PC-9 (cell line): ENCODE measurements at regions of chr2 and their contacts with region 1.

Region 1: DNA sequence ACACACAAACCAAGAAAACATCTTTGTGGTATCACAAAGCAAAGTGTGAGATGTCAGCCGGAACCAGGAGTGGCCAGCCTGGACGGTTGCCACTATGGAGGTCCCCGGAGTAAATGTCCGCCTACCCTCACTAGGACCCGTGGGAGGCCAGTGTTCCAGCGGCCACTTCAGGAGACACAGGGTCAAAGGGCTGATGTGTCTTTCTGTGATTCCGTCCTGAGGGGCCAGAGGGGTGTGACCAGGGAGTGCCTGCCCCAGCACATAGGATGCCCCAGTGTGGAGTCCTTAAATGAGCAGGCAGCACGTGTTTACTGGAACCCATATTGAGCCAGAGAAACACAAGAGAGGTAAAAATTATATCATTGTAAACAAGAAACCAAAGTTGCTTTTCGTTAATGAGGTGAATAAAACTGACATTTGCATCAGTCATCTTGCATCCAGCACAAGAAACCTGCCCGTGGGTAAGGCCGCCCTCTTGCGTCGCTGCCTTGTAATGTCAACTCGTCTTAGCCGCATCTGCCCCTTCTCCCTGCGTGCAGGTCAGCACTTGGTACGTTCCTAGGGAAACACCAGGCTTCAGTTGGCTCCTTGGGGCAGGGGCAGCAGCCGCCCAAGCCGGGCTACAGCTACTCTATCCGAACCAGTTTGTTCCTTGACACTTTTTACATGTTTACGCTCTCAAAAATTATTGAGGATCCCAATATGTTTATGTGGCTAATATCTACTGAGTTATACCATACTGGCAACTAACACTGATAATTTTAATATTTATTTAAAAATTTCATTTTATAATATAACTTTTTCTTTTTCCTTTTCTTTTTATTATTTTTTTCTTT is 46.7 kb upstream of the LAPTM4A start:
- DNase-seq: peak; percentile 68 to 73
- H3K4me3 ChIP-seq: no peak overlapping the region
- H3K27ac ChIP-seq: peak overlapping the region; percentile 1; the same call in 1 of the 2 replicates
- H3K4me1 ChIP-seq: peaks cover 26% of the 10 kb centered on the region
- H3K27me3 ChIP-seq: no peaks in the 10 kb centered on the region
- CTCF ChIP-seq: peak; percentile 90

Region 2: GRCh38 chr2:18387441-18388206 is 1710.5 kb before region 1 on chr2:
- CTCF ChIA-PET with region 1: no interaction called
- POLR2A ChIA-PET with region 1: no interaction called
- intact Hi-C with region 1: loop called (anchors 2 kb)
- DNase-seq: peak; percentile 55 to 70
- H3K4me3 ChIP-seq: no peak overlapping the region
- H3K27ac ChIP-seq: no peak overlapping the region
- H3K4me1 ChIP-seq: no peaks in the 10 kb centered on the region
- H3K27me3 ChIP-seq: no peaks in the 10 kb centered on the region
- CTCF ChIP-seq: peak; percentile 98

Region 3: DNA sequence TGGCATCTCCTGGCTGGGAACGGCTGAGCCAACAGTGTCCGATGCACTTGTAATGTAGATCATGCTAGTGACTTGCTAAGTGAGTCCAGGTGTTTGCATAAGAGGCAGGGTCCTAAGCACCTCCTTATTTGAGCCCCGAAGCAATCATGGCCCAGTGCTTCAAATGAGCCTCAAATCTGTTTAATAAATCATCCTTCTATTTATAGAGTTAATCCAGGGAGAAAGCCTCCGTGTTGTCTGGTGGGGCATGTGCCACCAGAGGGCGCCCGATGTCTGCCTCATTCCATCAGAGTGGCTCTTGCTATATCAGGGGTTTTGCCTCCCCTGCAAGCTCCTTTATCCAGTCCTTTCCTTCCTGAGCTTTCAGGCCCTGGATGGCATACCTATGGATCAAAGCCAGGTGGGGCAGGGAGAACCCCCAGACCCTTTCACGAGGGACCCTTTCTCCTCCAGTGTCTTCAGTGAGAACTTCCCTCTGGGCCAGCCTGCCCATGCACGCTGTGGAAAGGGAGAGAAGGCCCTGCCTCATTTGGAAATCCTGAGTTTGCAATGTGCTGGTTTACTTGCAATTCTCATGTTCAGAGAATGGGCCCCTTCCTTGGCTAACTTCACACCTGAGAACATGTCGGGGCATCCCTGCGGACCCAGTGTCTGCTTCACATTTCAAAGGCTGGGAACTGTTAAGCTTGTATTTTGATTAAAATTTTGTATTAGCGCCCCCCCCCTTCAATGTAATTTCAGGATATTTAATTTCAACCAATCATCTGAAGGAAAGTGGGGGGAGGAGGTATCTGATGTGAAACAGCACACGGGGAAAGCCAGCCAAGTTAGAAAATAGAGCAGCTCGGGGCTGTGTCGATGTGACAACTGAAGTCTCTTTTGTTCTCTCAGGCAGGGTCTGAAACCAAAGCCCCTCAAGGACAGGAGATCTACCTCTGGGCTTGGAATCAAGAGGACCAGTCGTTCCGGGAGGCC is 1577.4 kb before region 1 on chr2:
- CTCF ChIA-PET with region 1: no interaction called
- POLR2A ChIA-PET with region 1: no interaction called
- intact Hi-C with region 1: loop called (anchors 10 kb)
- DNase-seq: peak; percentile 56 to 73
- H3K4me3 ChIP-seq: no peak overlapping the region
- H3K27ac ChIP-seq: no peak overlapping the region
- H3K4me1 ChIP-seq: 0 out of 2 replicates have a peak, but pooled peaks cover 12% of the 10 kb centered on the region
- H3K27me3 ChIP-seq: no peaks in the 10 kb centered on the region
- CTCF ChIP-seq: peak; percentile 97

Region 4: DNA sequence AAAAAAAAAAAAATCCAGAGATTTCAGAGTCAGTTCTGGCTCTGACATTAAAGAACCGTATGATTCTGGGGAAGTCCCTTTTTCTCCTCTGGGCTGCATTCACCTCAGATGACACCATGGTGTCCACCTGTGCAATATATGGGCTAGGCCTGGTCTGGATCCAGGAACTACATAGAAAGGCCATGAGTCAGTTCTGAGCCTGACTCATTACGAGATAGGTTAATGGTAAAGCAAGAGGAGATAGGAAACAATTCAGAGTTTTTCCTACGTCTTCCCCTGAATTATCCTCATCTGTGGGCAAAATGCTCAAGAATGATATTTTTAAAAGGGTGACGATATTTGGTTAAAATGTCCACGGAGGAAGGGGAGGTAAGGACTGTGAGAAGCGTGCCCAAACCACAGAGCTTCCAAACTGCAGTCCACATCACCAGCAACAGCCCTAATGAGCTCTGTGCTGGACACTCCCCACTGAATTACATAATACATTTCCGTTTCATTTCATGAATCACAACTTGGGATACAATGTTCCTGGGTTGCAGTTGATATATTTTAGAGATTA is 559.6 kb before region 1 on chr2:
- CTCF ChIA-PET with region 1: no interaction called
- POLR2A ChIA-PET with region 1: no interaction called
- intact Hi-C with region 1: no loop called
- DNase-seq: peak; percentile 77 to 98
- H3K4me3 ChIP-seq: peak overlapping the region; percentile 41; the same call in 1 of the 2 replicates
- H3K27ac ChIP-seq: peak overlapping the region; percentile 97
- H3K4me1 ChIP-seq: peaks cover 70% of the 10 kb centered on the region
- H3K27me3 ChIP-seq: no peaks in the 10 kb centered on the region
- CTCF ChIP-seq: no peak

Region 5: DNA sequence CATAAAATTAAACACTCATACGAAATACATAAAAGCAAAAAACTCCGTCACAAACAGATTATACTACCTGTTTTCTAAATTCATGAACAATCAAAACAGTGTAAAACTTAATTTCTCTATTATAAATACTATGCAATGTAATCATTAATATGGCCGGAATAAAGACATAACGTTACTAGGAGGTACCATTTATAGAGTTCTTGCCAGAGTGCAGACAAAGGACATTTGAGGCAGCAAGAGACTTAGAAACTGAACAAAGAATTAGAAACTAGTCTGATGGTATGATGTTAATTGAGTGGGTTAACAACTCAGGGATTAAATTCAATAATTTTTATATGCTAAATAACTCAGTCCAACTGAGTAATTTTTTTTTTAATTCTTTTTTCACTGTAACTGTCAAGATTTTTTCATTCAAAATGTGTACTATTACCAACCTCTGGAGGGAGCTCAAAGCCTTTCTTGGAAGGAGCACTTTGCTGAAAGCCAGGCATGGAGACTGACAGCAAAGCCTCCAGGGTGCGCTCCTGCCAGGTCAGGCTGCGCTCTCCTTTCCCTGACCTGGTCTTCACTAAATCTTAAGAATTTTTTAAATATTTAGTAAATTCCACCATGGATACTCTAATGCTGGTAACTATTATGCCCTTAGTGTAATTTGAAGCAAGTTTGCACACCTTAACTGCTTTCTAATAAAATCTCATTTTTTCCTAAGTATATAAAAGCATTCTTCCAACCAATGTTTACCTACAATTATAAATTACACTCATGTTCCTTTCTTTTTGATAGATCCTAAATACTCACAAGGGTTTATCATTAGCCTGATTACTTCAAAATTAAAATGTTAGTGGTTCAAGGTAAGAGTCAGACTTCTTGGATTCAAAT is 142.3 kb before region 1 on chr2:
- CTCF ChIA-PET with region 1: no interaction called
- POLR2A ChIA-PET with region 1: no interaction called
- intact Hi-C with region 1: loop called (anchors 1 kb)
- DNase-seq: peak; percentile 57 to 69
- H3K4me3 ChIP-seq: no peak overlapping the region
- H3K27ac ChIP-seq: no peak overlapping the region
- H3K4me1 ChIP-seq: no peaks in the 10 kb centered on the region
- H3K27me3 ChIP-seq: no peaks in the 10 kb centered on the region
- CTCF ChIP-seq: peak; percentile 91

Region 6: GRCh38 chr2:20015472-20016083 is 82.5 kb before region 1 on chr2:
- CTCF ChIA-PET with region 1: interaction called, 4 read pairs
- POLR2A ChIA-PET with region 1: interaction called, 3 read pairs
- intact Hi-C with region 1: loop called (anchors 1 kb)
- DNase-seq: peak in 1 of 2 experiments; percentile 53
- H3K4me3 ChIP-seq: no peak overlapping the region
- H3K27ac ChIP-seq: no peak overlapping the region
- H3K4me1 ChIP-seq: peaks cover 5% of the 10 kb centered on the region; the same call in 1 of the 2 replicates
- H3K27me3 ChIP-seq: peaks cover 9% of the 10 kb centered on the region; the same call in 1 of the 2 replicates
- CTCF ChIP-seq: peak; percentile 82

Region 7: DNA sequence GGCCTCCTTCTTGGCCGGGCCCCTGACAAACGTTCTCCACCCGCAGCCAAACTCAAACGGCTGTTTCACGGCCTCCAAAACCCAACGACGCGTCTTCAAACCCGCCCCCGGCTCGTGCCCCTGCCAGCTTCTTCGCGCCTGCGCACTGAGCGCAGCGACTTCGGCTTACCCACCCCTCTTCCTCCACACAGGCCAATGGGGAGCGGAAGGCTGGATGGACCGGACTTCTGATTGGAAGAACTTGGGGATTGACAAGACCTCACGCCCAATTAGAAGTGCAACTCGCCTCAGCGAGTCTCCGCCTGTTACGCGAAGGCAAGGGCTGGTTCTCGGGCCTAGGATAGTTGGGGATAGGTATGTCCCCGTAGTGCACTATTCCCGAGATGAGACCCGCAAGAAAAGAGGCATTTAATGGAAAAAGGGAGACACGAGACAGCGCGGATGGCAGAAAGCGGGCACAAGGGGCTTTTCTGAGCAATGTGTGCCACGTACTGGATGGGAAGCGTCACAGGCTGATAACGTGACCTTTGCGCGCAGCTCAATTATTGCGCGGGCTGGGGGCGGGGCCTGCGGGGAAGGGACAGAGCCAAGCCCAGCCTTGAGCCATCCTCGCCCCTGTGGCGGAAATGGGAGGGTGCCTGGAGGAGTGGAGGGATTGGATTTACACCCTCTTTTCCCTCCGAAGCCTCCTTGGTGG is 46.4 kb before region 1 on chr2 and contains the start of gene LAPTM4A:
- CTCF ChIA-PET with region 1: no interaction called
- POLR2A ChIA-PET with region 1: no interaction called
- intact Hi-C with region 1: loop called (anchors 1 kb)
- DNase-seq: peak; percentile 96 to 100
- H3K4me3 ChIP-seq: peak within 1 kb of the TSS; percentile 85
- H3K27ac ChIP-seq: peak within 1 kb of the TSS; percentile 94
- H3K4me1 ChIP-seq: peaks cover 36% of the 10 kb centered on the region
- H3K27me3 ChIP-seq: no peaks in the 10 kb centered on the region
- CTCF ChIP-seq: no peak
- total RNA-seq, gene LAPTM4A: 96.6 and 125 TPM in 2 replicates

Region 8: DNA sequence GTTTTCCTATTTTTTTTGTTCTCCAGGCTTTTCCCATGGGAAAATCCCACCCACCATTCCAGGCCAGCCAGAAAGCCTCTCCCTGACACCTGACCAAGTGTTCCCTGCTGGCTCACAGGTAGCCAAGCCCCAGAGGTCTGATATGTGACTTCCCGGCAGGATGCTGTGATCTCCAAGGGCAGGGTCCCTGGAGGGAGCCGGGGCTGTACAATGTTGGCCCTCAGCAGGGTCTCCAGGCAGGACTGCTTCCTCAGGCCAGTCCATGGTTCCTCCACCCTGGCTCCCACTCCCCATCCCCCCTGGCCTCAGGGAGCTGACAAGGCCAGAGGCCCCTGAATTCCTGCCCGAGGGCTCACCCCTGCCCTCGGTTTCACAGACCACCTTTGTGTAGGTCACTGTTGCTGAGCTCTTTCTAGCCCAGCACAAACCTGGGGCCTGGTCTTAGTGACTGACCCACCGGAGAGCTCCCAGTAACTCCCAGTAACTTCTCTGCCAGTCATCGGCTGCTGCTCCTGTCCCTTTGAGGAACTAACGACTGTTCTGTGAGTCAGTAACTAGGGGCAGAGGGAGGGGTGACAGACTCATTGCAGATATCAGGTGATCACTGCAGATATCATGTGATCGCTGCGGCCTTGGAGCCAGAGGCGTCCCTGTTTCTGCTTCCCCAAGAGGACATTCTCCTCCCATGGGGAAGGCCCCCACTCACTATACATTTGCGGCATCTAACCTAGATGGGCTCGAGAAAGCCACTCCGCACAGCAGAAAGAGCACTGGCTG is 88.2 kb after region 1 on chr2:
- CTCF ChIA-PET with region 1: no interaction called
- POLR2A ChIA-PET with region 1: interaction called, 10 read pairs
- intact Hi-C with region 1: no loop called
- DNase-seq: peak; percentile 74 to 93
- H3K4me3 ChIP-seq: peak overlapping the region; percentile 54
- H3K27ac ChIP-seq: peak overlapping the region; percentile 92
- H3K4me1 ChIP-seq: peaks cover 59% of the 10 kb centered on the region
- H3K27me3 ChIP-seq: no peaks in the 10 kb centered on the region
- CTCF ChIP-seq: no peak